Activated CD4-positive, alpha-beta T cell treated with anti-CD3 and anti-CD28 coated beads, Interleukin-2, amount 10 ng/mL, durations not matched to agents 24 days and 14 days (primary cell): ENCODE measurements at regions of chr5 and their contacts with region 1.

Region 1: GRCh38 chr5:33440482-33441240 is at the start of gene TARS1:
- DNase-seq: peak; percentile 98
- H3K4me3 Mint-ChIP-seq: no peak within 1 kb of the TSS
- H3K27ac Mint-ChIP-seq: no peak within 1 kb of the TSS
- H3K4me1 Mint-ChIP-seq: peaks cover 27% of the 10 kb centered on the region
- H3K27me3 Mint-ChIP-seq: no peaks in the 10 kb centered on the region
- total RNA-seq, gene TARS1: 190 and 195 TPM in 2 replicates

Region 2: DNA sequence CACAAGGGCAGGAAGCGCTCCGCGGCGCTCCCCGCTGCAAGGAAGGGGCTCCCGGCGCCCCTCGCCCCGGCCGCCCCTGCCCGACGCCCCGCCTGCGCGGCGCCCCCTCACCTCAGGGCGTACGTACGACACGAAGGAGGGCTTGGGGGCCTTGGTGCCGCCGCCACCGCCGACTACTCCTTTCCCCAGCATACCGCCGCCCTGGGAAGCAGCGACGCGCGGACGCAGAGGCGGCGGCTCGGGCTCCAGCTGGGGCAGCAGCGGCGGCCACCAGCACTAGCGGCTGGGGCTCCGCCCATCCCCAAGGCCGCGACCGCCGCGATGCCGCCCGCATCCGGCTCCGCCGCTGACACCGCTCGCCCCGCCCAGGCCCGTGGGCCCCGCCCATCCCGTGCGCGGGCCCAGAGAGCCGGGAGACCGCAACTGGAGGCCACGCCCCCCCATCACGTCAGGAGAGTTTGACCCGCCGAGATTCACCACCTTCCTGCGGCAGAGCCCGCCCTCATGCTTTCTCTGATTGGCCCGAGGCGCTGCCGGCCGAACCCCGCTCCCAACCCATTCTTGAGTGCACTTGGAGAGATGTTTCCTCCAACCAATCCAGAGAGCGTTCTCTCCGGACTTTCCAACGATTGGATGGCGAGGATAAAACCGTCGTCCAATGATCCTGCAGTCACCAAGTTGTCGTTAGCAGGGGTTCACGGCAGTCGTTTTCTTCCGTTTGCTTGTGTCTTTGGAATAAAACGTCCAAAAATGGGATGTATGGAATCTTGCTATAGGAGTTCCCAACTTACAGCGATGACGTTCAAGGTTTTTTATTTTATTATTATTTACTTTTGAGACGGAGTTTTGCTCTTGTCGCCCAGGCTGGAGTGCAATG is 1127.8 kb before region 1 on chr5 and contains the start of gene MTMR12:
- intact Hi-C with region 1: loop called (anchors 5 kb)
- DNase-seq: peak; percentile 100
- H3K4me3 Mint-ChIP-seq: peak within 1 kb of the TSS; percentile 96
- H3K27ac Mint-ChIP-seq: peak within 1 kb of the TSS; percentile 87
- H3K4me1 Mint-ChIP-seq: peaks cover 28% of the 10 kb centered on the region
- H3K27me3 Mint-ChIP-seq: no peaks in the 10 kb centered on the region
- total RNA-seq, gene MTMR12: 26.5 and 29.8 TPM in 2 replicates

Region 3: DNA sequence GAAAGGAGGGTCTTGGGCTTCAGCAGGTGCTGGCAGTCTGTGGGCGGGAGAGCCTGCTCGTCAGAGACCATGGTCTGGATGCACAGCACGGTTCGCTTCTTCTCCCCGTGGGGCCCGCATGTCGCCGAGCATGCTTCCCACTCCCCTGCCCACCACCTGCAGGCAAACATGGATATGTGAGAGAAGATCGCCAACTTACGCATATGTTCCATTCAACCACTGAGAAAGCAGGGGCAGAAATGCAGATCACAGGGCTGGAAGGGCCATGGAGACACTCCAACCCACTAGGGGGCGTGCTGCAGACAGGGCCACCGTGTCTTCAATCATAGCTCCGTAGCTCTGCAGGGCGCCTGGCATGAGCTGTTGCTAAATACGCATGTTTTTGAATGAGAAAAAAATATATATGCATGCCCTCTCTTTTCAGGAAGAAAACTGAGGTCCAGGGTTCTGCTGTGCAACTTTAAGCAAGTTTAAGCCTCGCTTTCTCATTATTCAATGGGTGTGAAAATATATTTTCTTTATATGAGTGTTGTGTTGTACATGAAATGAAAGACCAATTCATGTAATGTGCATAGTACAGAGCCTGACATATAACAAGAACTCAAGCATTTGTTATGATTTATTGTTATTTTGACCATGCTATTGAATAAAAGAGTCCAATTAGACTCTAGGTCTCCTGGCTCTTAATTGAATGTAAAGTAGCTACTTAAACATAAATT is 148.2 kb after region 1 on chr5:
- intact Hi-C with region 1: loop called (anchors 2 kb)
- DNase-seq: peak; percentile 81
- H3K4me3 Mint-ChIP-seq: no peak overlapping the region
- H3K27ac Mint-ChIP-seq: no peak overlapping the region
- H3K4me1 Mint-ChIP-seq: no peaks in the 10 kb centered on the region
- H3K27me3 Mint-ChIP-seq: peaks cover 2% of the 10 kb centered on the region

Region 4: DNA sequence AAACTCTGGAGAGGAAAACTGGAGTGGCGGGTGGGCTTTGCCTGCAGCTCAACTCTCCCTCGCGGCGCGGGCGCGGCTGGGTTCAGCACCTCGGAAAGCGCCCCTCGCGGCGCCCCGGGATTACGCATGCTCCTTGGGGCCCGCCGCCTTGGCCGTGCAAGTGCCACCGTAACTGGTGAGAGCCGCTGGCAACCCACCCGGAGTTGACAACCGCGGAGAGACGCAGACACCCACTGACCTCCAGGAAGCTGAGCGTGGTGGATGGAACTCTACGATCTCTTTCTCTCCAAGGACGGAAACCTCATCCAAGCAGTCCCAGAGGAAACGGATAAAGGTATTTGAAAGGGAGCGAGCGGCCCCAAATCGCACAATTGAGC is 495.3 kb after region 1 on chr5:
- intact Hi-C with region 1: loop called (anchors 1 kb)
- DNase-seq: peak; percentile 87
- H3K4me3 Mint-ChIP-seq: no peak overlapping the region
- H3K27ac Mint-ChIP-seq: no peak overlapping the region
- H3K4me1 Mint-ChIP-seq: peaks cover 3% of the 10 kb centered on the region
- H3K27me3 Mint-ChIP-seq: peaks cover 60% of the 10 kb centered on the region

Region 5: GRCh38 chr5:34007621-34008600 is 567.2 kb after region 1 on chr5 and contains the start of gene AMACR:
- intact Hi-C with region 1: loop called (anchors 1 kb)
- DNase-seq: peak; percentile 97
- H3K4me3 Mint-ChIP-seq: peak within 1 kb of the TSS; percentile 88
- H3K27ac Mint-ChIP-seq: peak within 1 kb of the TSS; percentile 91
- H3K4me1 Mint-ChIP-seq: peaks cover 27% of the 10 kb centered on the region
- H3K27me3 Mint-ChIP-seq: peaks cover 2% of the 10 kb centered on the region
- total RNA-seq, gene AMACR: 6.4 and 7.7 TPM in 2 replicates

Region 6: DNA sequence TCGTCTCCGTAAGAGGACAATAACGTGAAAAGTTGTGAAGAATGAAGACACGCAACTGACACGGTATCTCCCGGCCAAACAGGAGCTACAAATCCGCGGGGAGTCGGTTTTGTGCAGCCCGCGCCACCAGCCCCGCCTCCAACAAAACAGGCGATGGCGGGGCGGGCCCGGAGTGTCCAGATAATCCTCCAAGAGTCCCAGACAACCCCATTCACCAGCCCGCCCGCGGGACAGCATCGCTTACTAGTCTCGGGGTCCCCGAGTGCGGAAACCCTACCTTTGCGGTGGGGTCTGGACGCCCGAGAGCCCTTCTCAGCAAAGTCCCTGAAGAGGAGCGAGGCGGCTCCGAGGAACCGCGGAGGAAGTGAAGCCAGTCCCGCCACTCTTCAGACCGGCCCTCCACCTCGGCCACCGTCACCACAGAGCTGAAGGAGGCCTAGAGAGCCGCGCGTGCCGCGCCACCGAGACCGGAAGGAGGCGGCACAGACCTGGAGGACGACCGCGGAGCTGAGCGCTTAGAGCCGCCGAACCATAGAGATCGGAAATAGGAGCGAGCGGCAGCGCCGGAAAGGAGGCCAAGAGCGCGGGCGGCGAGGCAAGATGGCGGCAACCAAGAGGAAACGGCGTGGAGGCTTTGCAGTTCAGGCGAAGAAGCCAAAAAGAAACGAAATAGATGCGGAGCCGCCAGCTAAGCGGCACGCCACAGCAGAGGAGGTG is 1474.6 kb after region 1 on chr5 and contains the starts of genes BRIX1 and RAD1:
- intact Hi-C with region 1: loop called (anchors 1 kb)
- DNase-seq: peak; percentile 98
- H3K4me3 Mint-ChIP-seq: no peak within 1 kb of the TSS
- H3K27ac Mint-ChIP-seq: peak within 1 kb of the TSS; percentile 71
- H3K4me1 Mint-ChIP-seq: peaks cover 19% of the 10 kb centered on the region
- H3K27me3 Mint-ChIP-seq: no peaks in the 10 kb centered on the region
- total RNA-seq, gene BRIX1: 120 and 128 TPM in 2 replicates
- total RNA-seq, gene RAD1: 46.4 and 48.9 TPM in 2 replicates